Activated naive CD4-positive, alpha-beta T cell treated with anti-CD3 and anti-CD28 coated beads for 36 hours (primary cell): ENCODE measurements at regions of chr4 and their contacts with region 1.

Region 1: GRCh38 chr4:15001869-15002658 is at the start of gene CPEB2:
- DNase-seq: peak; percentile 91
- H3K4me3 Mint-ChIP-seq: peak within 1 kb of the TSS; percentile 88
- H3K27ac Mint-ChIP-seq: peak within 1 kb of the TSS; percentile 94
- H3K4me1 Mint-ChIP-seq: peaks cover 12% of the 10 kb centered on the region
- H3K27me3 Mint-ChIP-seq: no peaks in the 10 kb centered on the region
- total RNA-seq, gene CPEB2: 4.4 to 5.4 TPM

Region 2: GRCh38 chr4:13484122-13484748 is 1517.8 kb before region 1 on chr4 and contains the start of gene RAB28:
- CTCF ChIA-PET with region 1: no interaction called
- intact Hi-C with region 1: loop called (anchors 1 kb)
- DNase-seq: peak; percentile 92
- H3K4me3 Mint-ChIP-seq: peak within 1 kb of the TSS; percentile 89
- H3K27ac Mint-ChIP-seq: peak within 1 kb of the TSS; percentile 98
- H3K4me1 Mint-ChIP-seq: peaks cover 25% of the 10 kb centered on the region
- H3K27me3 Mint-ChIP-seq: peaks cover 3% of the 10 kb centered on the region
- total RNA-seq, gene RAB28: 15.6 to 16.7 TPM

Region 3: DNA sequence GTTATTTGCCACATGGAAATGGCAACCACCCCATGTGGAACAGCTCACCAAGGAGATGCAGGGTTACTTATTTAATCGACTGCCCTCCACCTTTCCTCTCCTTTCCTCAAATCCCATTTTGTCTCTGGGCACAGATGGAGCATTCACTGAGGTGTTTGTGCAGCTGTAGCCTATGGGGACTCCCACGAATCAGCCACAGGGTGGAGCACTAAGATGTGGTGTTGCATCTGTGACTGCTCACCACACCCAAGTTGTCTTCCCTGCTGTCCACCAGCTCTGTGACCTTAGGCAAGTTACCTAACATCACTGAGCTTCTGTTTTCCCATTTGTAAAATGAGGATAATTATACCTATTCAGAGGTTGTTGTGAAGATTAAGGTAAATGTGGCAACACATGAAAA is 252.2 kb before region 1 on chr4:
- CTCF ChIA-PET with region 1: interaction called, 3 read pairs
- intact Hi-C with region 1: loop called (anchors 1 kb)
- DNase-seq: peak; percentile 50
- H3K4me3 Mint-ChIP-seq: no peak overlapping the region
- H3K27ac Mint-ChIP-seq: no peak overlapping the region
- H3K4me1 Mint-ChIP-seq: no peaks in the 10 kb centered on the region
- H3K27me3 Mint-ChIP-seq: peaks cover 7% of the 10 kb centered on the region

Region 4: GRCh38 chr4:14871676-14872430 is 130.2 kb before region 1 on chr4:
- CTCF ChIA-PET with region 1: no interaction called
- intact Hi-C with region 1: loop called (anchors 5 kb)
- DNase-seq: peak; percentile 38
- H3K4me3 Mint-ChIP-seq: no peak overlapping the region
- H3K27ac Mint-ChIP-seq: no peak overlapping the region
- H3K4me1 Mint-ChIP-seq: peaks cover 8% of the 10 kb centered on the region
- H3K27me3 Mint-ChIP-seq: no peaks in the 10 kb centered on the region

Region 5: GRCh38 chr4:15182600-15183220 is 180.6 kb after region 1 on chr4:
- CTCF ChIA-PET with region 1: no interaction called
- intact Hi-C with region 1: loop called (anchors 5 kb)
- DNase-seq: peak; percentile 56
- H3K4me3 Mint-ChIP-seq: no peak overlapping the region
- H3K27ac Mint-ChIP-seq: no peak overlapping the region
- H3K4me1 Mint-ChIP-seq: peaks cover 25% of the 10 kb centered on the region
- H3K27me3 Mint-ChIP-seq: no peaks in the 10 kb centered on the region

Region 6: GRCh38 chr4:15681207-15682015 is 679.3 kb after region 1 on chr4 and contains the start of gene FAM200B:
- CTCF ChIA-PET with region 1: no interaction called
- intact Hi-C with region 1: loop called (anchors 1 kb)
- DNase-seq: peak; percentile 99
- H3K4me3 Mint-ChIP-seq: peak within 1 kb of the TSS; percentile 90
- H3K27ac Mint-ChIP-seq: peak within 1 kb of the TSS; percentile 89
- H3K4me1 Mint-ChIP-seq: peaks cover 39% of the 10 kb centered on the region
- H3K27me3 Mint-ChIP-seq: peaks cover 3% of the 10 kb centered on the region
- total RNA-seq, gene FAM200B: 8.0 to 9.1 TPM